Pancreas (tissue), 10 donors: ENCODE measurements at regions of chr3 and their contacts with region 1.

Region 1: DNA sequence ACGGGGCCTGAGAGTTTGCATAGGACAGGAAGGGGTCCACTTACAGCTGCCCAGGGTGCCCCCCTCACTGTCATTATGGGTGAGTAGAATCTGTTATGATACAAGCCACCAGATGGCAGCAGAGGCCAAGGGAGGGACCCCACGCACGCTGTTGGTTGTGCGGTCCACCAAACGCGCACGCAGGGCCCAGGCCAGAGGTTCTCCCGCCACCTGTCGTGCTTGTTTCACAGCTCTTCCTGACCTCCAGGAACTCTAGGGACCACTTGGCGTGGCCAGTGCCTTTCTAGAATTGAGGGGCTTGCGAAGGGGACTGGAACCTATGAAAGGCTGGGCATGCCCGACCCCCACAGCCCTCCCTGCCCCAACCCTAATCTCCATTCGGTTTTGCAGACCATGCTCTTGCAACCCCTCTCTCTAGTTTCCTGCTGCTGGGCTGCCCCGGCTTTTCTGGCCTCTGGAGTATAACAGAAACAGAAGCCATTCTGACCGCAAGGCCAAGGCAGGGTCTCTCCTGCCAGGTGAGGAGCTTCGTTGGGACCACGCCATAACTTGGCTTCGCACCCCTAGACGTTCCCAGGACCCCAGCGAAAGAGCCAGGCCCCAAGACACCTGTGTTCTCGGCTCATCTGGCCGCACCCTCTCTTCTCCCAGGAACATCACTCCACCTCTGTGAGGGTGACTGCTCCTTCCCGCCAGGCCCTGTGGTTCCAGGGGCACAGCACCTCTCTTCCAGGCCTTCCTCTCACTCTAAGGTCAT is 46.0 kb downstream of the ALDH1L1 start:
- DNase-seq: peak; percentile 35 to 84 (median 66)
- ATAC-seq: peak; percentile 76 to 89 (median 86)
- H3K4me3 ChIP-seq: no peak overlapping the region
- H3K27ac ChIP-seq: no peak overlapping the region
- H3K4me1 ChIP-seq: no peaks in the 10 kb centered on the region
- H3K27me3 ChIP-seq: no peaks in the 10 kb centered on the region
- CTCF ChIP-seq: peak; percentile 54 to 78 (median 66)

Region 2: DNA sequence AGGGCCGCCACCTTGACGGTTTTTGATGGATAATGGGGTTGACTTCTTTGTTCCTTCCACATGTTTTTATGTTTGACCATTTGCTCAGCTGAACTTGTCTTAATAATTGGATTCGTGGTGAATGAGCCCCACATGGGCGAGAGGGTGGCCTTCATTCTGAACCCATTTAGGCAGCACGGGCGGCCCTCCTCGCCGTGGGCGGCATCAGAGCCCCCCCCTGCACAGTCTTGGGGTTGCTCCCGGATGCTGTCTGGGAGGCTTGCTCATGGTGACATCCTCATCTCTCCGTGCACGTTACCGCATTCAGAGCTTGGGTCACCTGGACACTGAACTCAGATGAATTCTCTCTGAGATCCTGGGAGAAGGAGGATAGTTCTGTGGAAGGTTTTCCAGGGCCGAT is 366.8 kb before region 1 on chr3:
- intact Hi-C with region 1: no loop called
- DNase-seq: no peak
- ATAC-seq: no peak
- H3K4me3 ChIP-seq: no peak overlapping the region
- H3K27ac ChIP-seq: no peak overlapping the region
- H3K4me1 ChIP-seq: no peaks in the 10 kb centered on the region
- H3K27me3 ChIP-seq: no peaks in the 10 kb centered on the region
- CTCF ChIP-seq: no peak

Region 3: DNA sequence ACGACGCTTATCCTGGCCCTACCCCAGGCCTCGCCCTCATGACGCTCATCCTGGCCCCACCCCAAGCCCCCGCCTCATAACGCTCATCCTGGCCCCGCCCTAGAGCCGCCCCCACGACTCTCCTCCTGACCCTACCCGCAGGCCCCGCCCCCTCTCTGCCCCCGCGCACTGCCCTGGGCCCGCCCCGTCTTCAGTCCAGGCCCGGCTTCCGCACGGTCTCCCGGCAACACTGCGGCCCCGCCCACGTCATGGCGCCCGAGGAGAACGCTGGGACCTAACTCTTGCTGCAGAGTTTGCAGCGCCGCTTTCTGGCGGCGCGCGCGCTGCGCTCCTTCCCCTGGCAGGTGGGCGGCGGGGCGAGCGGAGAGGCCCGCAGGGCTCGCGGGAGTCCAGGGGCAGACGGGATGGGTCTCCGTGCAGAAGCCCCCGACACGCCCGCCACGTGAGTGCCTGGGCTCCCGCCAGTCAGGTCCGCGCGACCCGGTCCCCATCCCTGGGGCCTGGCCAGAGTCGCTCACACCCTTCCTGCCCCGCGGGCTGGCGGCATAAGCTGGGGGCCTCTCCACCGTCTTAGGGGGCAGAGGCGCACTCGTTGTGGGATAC is 217.9 kb before region 1 on chr3:
- intact Hi-C with region 1: no loop called
- DNase-seq: peak in 2 of 6 donors; percentile 98 to 100
- ATAC-seq: peak; percentile 89 to 100 (median 98)
- H3K4me3 ChIP-seq: peak overlapping the region; percentile 43 to 82 (median 63)
- H3K27ac ChIP-seq: peak overlapping the region; percentile 46 to 61 (median 54)
- H3K4me1 ChIP-seq: peaks cover 0 to 6% (median 3%) of the 10 kb centered on the region in 3 donors
- H3K27me3 ChIP-seq: no peaks in the 10 kb centered on the region
- CTCF ChIP-seq: no peak

Region 4: GRCh38 chr3:126026277-126026751 is 108.1 kb before region 1 on chr3:
- intact Hi-C with region 1: no loop called
- DNase-seq: no peak
- ATAC-seq: no peak
- H3K4me3 ChIP-seq: no peak overlapping the region
- H3K27ac ChIP-seq: no peak overlapping the region
- H3K4me1 ChIP-seq: no peaks in the 10 kb centered on the region
- H3K27me3 ChIP-seq: no peaks in the 10 kb centered on the region
- CTCF ChIP-seq: no peak

Region 5: GRCh38 chr3:126040386-126040785 is 94.0 kb before region 1 on chr3:
- intact Hi-C with region 1: no loop called
- DNase-seq: peak in 1 of 6 donors; percentile 4
- ATAC-seq: no peak
- H3K4me3 ChIP-seq: no peak overlapping the region
- H3K27ac ChIP-seq: no peak overlapping the region
- H3K4me1 ChIP-seq: no peaks in the 10 kb centered on the region
- H3K27me3 ChIP-seq: no peaks in the 10 kb centered on the region
- CTCF ChIP-seq: no peak

Region 6: GRCh38 chr3:126208618-126209256 is 74.3 kb after region 1 on chr3:
- intact Hi-C with region 1: loop called in 2 of 3 experiments (anchors 10 kb)
- DNase-seq: peak; percentile 78 to 96 (median 90)
- ATAC-seq: peak; percentile 42 to 78 (median 71)
- H3K4me3 ChIP-seq: no peak overlapping the region
- H3K27ac ChIP-seq: no peak overlapping the region
- H3K4me1 ChIP-seq: peaks cover 0 to 3% (median 0%) of the 10 kb centered on the region in 3 donors
- H3K27me3 ChIP-seq: no peaks in the 10 kb centered on the region
- CTCF ChIP-seq: no peak

Region 7: GRCh38 chr3:126394575-126395228 is 260.3 kb after region 1 on chr3 and contains the start of gene CFAP100:
- intact Hi-C with region 1: loop called in 1 of 3 experiments (anchors 5 kb)
- DNase-seq: peak in 2 of 6 donors; percentile 49 to 65
- ATAC-seq: peak; percentile 46 to 79 (median 62)
- H3K4me3 ChIP-seq: peak within 1 kb of the TSS in 1 of 4 donors; percentile 22
- H3K27ac ChIP-seq: no peak within 1 kb of the TSS
- H3K4me1 ChIP-seq: no peaks in the 10 kb centered on the region
- H3K27me3 ChIP-seq: no peaks in the 10 kb centered on the region
- CTCF ChIP-seq: no peak
- total RNA-seq, gene CFAP100: not detected